ENCODE measurements at regions of chr5 and their contacts with region 1.

Region 1: DNA sequence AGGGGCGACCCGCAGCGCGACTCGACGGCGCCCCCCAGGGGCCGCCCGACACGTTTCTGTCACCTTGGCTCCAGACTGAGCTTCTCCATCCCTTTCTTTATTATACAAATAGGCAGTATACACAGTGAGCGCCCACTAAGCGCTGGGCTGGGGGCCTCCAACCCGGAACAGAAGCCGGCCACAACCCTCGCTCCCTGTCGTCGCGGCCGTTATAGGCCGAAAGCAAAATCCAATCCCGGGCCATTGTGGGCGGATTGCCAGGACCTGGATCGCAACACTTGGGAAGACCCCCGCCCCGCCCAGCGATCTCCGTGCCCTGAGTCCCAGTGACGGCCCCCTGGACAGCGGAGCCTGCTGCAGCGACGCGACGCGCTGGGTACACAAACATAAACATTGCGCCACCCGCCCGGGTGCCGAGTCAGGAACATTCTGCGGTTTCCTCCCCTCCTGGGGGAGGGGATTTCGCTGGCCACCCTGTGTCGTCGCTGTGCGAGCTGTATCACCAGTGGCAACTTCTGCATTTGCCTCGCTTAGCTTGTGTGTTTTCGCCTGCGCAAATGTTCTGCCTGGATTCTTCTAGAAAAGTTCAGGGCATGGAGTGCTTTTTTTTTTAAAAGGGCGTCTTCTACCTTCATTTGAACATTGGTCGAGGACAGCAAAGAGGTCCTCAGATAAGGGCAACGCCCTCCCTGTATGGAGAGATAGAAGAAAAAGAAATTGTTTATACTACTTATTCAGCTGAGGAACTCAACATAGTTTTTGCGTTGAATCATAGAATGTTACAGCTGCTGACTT is 1.3 kb upstream of the DUSP1 start:
- DNase-seq: peak; percentile 89 to 95
- ATAC-seq: peak; percentile 44 to 70 (median 60)
- H3K4me3 ChIP-seq: peak overlapping the region; percentile 72
- H3K4me3 Mint-ChIP-seq: peak overlapping the region; percentile 96
- H3K27ac ChIP-seq: peak overlapping the region; percentile 99
- H3K27ac Mint-ChIP-seq: peak overlapping the region; percentile 98 to 99
- H3K4me1 ChIP-seq: peaks cover 69% of the 10 kb centered on the region
- H3K4me1 Mint-ChIP-seq: peaks cover 57 to 87% of the 10 kb centered on the region in 2 donors
- H3K27me3 ChIP-seq: no peaks in the 10 kb centered on the region
- H3K27me3 Mint-ChIP-seq: no peaks in the 10 kb centered on the region
- CTCF ChIP-seq: peak; percentile 87

Region 2: DNA sequence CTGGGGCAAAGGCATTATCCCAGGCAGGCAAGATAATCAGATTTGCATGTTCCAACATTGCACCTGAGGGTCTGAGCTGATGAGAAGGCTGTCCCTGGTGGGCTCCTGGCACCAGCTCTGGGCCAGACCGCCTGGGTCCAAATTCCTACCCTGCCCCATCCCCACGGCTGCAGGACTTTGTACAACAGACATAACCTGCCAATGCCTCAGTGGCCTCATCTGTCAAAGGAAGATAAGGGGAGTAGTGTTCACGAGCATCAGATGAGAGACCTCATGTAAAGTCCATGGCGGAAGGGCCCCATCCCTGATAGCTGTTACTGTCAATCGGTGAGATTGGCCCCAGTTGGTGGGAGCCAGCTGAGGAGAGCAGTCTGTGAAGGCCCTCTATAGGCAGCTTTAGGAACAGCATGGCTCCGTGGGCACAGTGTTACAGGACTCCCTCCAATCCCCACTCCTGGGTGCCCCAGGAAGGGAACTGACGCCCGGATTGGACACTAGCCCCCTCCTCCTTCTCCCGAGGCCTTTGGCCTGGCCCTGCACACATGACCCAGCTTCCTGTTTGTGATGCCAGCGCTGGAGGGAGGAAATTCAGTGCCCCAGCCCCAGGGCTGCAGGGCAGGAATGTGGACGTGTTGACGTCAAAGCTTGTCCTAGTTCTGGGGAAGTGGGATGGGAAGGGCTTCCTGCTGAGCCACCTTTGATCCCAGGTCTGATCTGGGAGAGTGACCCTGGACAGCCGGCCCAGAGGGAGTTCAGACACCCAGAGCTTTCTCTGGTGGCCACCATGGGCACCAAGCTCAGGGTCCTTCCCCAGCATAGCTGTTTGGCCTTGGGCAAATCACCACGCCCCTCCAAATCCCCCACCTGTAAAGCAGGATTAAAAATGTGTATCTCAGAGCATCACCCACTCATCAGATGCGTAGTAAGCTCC is 57.6 kb before region 1 on chr5:
- intact Hi-C with region 1: loop called (anchors 2 kb)
- DNase-seq: peak; percentile 58 to 84
- ATAC-seq: peak; percentile 74 to 83 (median 75)
- H3K4me3 ChIP-seq: no peak overlapping the region
- H3K4me3 Mint-ChIP-seq: no peak overlapping the region
- H3K27ac ChIP-seq: no peak overlapping the region
- H3K27ac Mint-ChIP-seq: peak overlapping the region in 1 of 2 donors; percentile 57
- H3K4me1 ChIP-seq: peaks cover 23% of the 10 kb centered on the region
- H3K4me1 Mint-ChIP-seq: peaks cover 15 to 21% of the 10 kb centered on the region in 2 donors
- H3K27me3 ChIP-seq: peaks cover 5% of the 10 kb centered on the region
- H3K27me3 Mint-ChIP-seq: peaks cover 18 to 30% of the 10 kb centered on the region in 2 donors
- CTCF ChIP-seq: peak; percentile 81

Region 3: DNA sequence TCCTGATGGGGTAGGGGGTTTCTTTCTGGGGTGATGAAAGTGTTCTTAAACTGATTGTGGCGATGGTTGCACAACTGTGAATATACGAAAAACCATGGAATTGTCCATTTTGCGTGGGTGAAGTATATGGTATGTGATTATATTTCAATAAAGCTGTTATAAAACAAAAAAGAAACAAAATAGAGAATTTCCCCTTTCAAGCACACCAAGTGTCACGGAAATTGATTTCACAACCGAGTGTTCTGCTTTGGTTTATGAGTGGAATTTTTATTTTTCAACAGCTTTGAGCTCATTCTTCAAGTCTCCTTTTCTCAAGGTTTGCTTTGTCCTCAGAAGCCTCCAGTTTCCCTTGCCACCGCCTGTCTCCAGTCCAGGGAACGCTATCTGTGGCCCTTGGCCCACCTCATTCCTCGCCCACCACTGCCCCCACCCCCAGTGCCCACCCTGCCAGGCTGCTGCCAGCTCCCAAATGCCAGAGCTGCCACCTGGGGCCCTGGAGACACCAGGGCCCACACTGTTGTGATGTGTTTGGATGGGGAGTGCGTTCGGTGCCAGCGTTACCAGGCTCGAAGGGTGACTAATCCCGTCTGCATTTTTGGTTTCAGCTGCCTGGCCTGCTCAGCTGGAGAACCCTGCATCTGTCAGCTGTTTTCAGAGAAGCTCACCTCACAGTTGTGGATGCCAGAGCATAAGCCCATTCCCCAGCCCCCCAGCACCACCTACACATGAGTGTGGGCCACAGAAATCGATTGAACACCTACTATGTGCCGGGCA is 31.7 kb before region 1 on chr5:
- intact Hi-C with region 1: no loop called
- DNase-seq: no peak
- ATAC-seq: no peak
- H3K4me3 ChIP-seq: no peak overlapping the region
- H3K4me3 Mint-ChIP-seq: no peak overlapping the region
- H3K27ac ChIP-seq: no peak overlapping the region
- H3K27ac Mint-ChIP-seq: peak overlapping the region in 1 of 2 donors; percentile 10
- H3K4me1 ChIP-seq: peaks cover 33% of the 10 kb centered on the region
- H3K4me1 Mint-ChIP-seq: peaks cover 11 to 17% of the 10 kb centered on the region in 2 donors
- H3K27me3 ChIP-seq: no peaks in the 10 kb centered on the region
- H3K27me3 Mint-ChIP-seq: peaks cover 6 to 7% of the 10 kb centered on the region in 2 donors
- CTCF ChIP-seq: no peak

Region 4: DNA sequence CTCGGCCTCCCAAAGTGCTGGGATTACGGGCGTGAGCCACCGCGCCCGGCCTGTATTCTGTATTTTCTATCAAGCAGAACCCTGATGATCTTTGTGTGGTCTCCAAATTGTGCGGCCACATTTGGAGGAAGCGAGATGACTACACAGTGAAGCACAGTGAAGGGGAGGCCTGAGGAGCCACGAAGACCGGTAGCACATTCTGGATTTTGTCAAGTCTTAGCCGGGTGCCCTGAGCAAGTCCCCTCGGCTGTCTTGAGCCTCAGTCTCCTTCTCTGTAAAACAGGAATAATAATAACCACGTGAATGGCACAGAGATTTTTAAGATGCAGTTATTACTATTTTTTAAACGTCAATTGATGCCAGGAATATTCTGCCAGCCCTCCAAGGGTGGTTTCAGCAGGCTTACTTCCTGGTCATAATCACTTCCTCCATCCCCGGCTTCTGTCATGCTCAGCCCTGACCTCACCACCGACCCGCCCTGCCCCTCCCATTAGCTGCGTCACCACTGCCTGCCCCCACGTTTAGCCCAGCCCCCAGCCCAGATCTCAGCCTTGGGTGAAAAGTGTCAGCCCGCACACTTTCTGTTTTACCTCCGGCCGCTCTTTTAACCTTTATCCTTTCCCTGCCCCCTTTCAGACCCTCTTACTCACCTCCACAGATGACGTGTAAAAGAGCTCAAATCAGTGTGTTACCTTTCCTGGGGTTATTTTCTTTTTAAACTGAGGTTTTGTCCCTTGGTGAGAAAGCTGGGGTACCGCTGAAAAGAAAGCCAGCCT is 34.8 kb after region 1 on chr5:
- intact Hi-C with region 1: loop called (anchors 1 kb)
- DNase-seq: peak; percentile 77 to 90
- ATAC-seq: peak; percentile 97 to 99 (median 99)
- H3K4me3 ChIP-seq: peak overlapping the region; percentile 49
- H3K4me3 Mint-ChIP-seq: peak overlapping the region; percentile 80
- H3K27ac ChIP-seq: peak overlapping the region; percentile 91
- H3K27ac Mint-ChIP-seq: peak overlapping the region; percentile 81 to 93
- H3K4me1 ChIP-seq: peaks cover 21% of the 10 kb centered on the region
- H3K4me1 Mint-ChIP-seq: peaks cover 9 to 25% of the 10 kb centered on the region in 2 donors
- H3K27me3 ChIP-seq: no peaks in the 10 kb centered on the region
- H3K27me3 Mint-ChIP-seq: no peaks in the 10 kb centered on the region
- CTCF ChIP-seq: no peak

Region 5: DNA sequence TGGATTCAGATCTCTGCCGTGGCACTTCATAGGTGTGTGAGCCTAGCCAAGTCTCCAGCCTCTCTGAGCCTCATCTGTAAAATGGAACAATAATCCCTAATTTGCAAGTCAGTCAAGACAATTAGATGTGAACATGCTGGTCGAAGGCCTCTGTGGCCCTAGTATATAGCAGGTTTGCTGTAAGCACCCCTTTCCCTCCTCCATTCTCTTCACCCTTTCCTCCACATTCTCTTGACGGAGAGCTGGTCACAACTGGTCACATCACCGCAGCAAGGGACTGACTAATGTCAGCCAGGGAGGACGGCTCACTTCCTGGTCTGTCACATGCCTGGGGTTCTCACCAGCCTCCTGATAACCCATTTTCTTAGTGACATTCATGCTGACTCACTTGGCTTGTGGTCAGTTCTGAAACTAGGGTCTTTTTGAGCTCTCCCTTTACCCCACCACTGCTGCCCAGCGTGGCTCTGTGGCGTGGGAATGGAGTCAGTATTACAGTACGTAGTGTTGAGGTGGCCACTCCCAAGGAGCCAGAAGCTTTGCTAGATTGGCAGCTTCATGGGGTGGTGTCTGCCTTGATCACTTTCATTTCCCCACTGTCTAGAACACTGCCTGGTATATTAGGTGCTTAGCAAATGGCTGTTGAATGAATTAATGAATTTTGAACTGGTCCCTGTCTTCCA is 109.5 kb after region 1 on chr5:
- intact Hi-C with region 1: loop called (anchors 2 kb)
- DNase-seq: peak; percentile 38 to 56
- ATAC-seq: peak; percentile 86 to 91 (median 90)
- H3K4me3 ChIP-seq: no peak overlapping the region
- H3K4me3 Mint-ChIP-seq: no peak overlapping the region
- H3K27ac ChIP-seq: peak overlapping the region; percentile 63
- H3K27ac Mint-ChIP-seq: peak overlapping the region; percentile 86 to 91
- H3K4me1 ChIP-seq: peaks cover 35% of the 10 kb centered on the region
- H3K4me1 Mint-ChIP-seq: peaks cover 29 to 50% of the 10 kb centered on the region in 2 donors
- H3K27me3 ChIP-seq: no peaks in the 10 kb centered on the region
- H3K27me3 Mint-ChIP-seq: no peaks in the 10 kb centered on the region
- CTCF ChIP-seq: no peak

Region 6: GRCh38 chr5:172932313-172933017 is 160.2 kb after region 1 on chr5:
- intact Hi-C with region 1: loop called (anchors 2 kb)
- DNase-seq: peak; percentile 72 to 86
- ATAC-seq: peak; percentile 93 to 100 (median 99)
- H3K4me3 ChIP-seq: no peak overlapping the region
- H3K4me3 Mint-ChIP-seq: no peak overlapping the region
- H3K27ac ChIP-seq: no peak overlapping the region
- H3K27ac Mint-ChIP-seq: peak overlapping the region; percentile 51 to 79
- H3K4me1 ChIP-seq: peaks cover 6% of the 10 kb centered on the region
- H3K4me1 Mint-ChIP-seq: peaks cover 7 to 8% of the 10 kb centered on the region in 2 donors
- H3K27me3 ChIP-seq: no peaks in the 10 kb centered on the region
- H3K27me3 Mint-ChIP-seq: no peaks in the 10 kb centered on the region
- CTCF ChIP-seq: peak; percentile 94

Region 7: GRCh38 chr5:173057062-173057924 is 285.0 kb after region 1 on chr5:
- intact Hi-C with region 1: loop called (anchors 2 kb)
- DNase-seq: peak; percentile 98 to 99
- ATAC-seq: peak; percentile 80 to 93 (median 83)
- H3K4me3 ChIP-seq: peak overlapping the region; percentile 86
- H3K4me3 Mint-ChIP-seq: peak overlapping the region; percentile 94
- H3K27ac ChIP-seq: peak overlapping the region; percentile 92
- H3K27ac Mint-ChIP-seq: peak overlapping the region; percentile 89 to 95
- H3K4me1 ChIP-seq: peaks cover 8% of the 10 kb centered on the region
- H3K4me1 Mint-ChIP-seq: peaks cover 36 to 37% of the 10 kb centered on the region in 2 donors
- H3K27me3 ChIP-seq: no peaks in the 10 kb centered on the region
- H3K27me3 Mint-ChIP-seq: peaks cover 4 to 10% of the 10 kb centered on the region in 2 donors
- CTCF ChIP-seq: no peak

Measured in natural killer cell (primary cell).